ENCODE measurements at regions of chr3 and their contacts with region 1.

Region 1: GRCh38 chr3:149808209-149808829 is 4.7 kb upstream of the RNF13 start:
- DNase-seq: peak; percentile 59 to 72 (median 71)
- H3K4me3 ChIP-seq: no peak overlapping the region
- H3K4me3 Mint-ChIP-seq: no peak overlapping the region
- H3K27ac ChIP-seq: no peak overlapping the region
- H3K27ac Mint-ChIP-seq: no peak overlapping the region
- H3K4me1 ChIP-seq: peaks cover 14 to 24% of the 10 kb centered on the region in 2 donors
- H3K4me1 Mint-ChIP-seq: peaks cover 24% of the 10 kb centered on the region
- H3K27me3 ChIP-seq: no peaks in the 10 kb centered on the region
- H3K27me3 Mint-ChIP-seq: peaks cover 0 to 5% (median 2%) of the 10 kb centered on the region in 3 donors
- CTCF ChIP-seq: peak; percentile 89

Region 2: DNA sequence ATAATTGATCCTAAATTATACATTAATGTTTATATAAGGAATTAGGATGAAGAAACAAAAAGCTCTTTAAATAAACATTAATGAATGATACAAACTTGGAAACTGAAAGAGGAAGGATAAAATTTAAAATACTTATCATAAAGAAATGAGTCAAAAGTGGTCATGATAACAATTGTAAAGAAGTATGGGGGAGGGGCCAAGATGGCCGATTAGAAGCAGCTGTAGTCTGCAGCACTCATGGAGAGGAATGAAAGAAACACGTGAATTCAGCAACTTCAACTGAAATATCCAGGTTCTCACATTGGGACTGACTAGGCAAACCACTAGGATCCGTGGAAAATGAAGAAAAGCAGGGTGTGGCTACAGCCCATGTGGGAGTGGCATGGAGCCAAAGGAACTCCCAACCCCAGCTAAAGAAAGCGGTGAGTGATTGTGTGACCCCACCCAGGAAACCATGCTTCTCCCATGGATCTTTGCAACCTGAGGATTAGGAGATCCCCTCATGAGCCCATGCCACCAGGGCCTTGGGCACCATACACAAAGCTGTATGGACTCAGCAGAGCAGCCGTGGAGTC is 573.6 kb before region 1 on chr3:
- intact Hi-C with region 1: no loop called
- DNase-seq: no peak
- H3K4me3 ChIP-seq: no peak overlapping the region
- H3K4me3 Mint-ChIP-seq: peak overlapping the region in 1 of 2 donors; percentile 6
- H3K27ac ChIP-seq: no peak overlapping the region
- H3K27ac Mint-ChIP-seq: peak overlapping the region in 1 of 7 donors; percentile 81
- H3K4me1 ChIP-seq: peaks cover 7 to 13% of the 10 kb centered on the region in 2 donors
- H3K4me1 Mint-ChIP-seq: peaks cover 8% of the 10 kb centered on the region
- H3K27me3 ChIP-seq: no peaks in the 10 kb centered on the region
- H3K27me3 Mint-ChIP-seq: peaks cover 0 to 1% (median 0%) of the 10 kb centered on the region in 3 donors
- CTCF ChIP-seq: no peak

Region 3: DNA sequence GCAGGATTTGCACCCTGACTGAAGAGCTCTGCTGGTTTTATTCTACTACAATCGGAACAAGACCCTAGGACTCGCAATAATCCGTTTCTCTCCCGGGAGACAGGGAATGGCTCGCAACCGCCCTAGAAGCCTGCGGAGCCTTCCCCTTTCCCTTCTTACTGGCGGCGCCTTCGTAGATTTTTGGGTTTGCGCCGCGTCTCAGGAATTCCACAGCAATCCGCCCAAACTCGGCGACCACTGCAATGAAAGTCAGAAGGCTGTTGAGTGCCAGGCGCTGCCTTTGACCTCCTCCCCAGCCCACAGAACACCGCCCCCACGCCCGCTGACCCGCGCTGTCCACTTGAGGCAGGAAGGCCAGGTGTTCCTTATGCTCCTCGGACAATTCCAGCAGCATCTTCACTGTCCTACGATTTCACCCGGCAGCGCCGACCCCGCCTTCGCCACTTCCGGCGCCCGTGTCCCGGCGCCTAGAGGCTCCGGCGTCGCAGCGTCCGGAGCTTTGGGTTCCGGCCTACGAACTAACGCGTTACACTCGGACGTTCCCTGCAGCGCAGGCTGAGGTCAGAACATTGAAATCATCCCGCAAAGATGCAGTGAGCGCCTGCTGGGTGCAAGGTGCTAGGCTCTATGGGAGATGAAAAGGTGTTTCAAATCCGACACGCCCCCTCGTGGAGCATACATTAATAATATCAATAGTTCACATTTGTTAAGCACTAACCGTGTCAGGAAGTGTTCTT is 56.1 kb before region 1 on chr3 and contains the start of gene COMMD2:
- intact Hi-C with region 1: loop called in 1 of 2 experiments (anchors 5 kb)
- DNase-seq: peak; percentile 61 to 69 (median 69)
- H3K4me3 ChIP-seq: peak within 1 kb of the TSS; percentile 86 to 97 (median 95)
- H3K4me3 Mint-ChIP-seq: peak within 1 kb of the TSS; percentile 95 to 99
- H3K27ac ChIP-seq: peak within 1 kb of the TSS; percentile 44 to 83
- H3K27ac Mint-ChIP-seq: peak within 1 kb of the TSS; percentile 80 to 95 (median 91)
- H3K4me1 ChIP-seq: peaks cover 7 to 24% of the 10 kb centered on the region in 2 donors
- H3K4me1 Mint-ChIP-seq: peaks cover 21% of the 10 kb centered on the region
- H3K27me3 ChIP-seq: no peaks in the 10 kb centered on the region
- H3K27me3 Mint-ChIP-seq: peaks cover 0 to 4% (median 0%) of the 10 kb centered on the region in 3 donors
- CTCF ChIP-seq: peak; percentile 24
- polyA plus RNA-seq, gene COMMD2: 15.1 to 74.4 (median 73.5) TPM

Region 4: DNA sequence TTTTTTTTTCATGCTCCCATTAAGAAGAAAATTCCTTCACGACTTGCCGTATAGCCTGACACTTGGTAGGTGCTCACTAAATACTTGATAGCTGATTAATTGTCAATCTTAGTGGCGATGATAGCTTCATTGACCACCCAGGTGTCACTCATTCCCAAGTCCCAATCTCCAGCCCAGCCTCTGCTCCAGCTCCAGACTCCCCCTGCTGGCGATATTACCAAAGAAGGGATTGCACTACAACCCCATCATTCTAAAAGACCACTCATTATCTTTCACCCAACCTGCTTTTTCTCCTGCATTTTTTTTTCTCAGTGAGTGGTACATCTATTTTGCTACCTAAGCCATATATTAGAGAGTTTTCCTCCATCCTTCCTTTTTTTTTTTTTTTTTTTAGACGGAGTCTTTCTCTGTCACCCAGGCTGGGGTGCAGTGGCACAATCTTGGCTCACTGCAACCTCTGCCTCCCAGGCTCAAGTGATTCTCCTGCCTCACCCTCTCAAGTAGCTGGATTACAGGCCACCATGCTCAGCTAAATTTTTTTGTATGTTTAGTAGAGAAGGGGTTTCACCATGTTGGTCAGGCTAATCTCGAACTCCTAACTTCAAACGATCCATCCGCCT is 36.6 kb before region 1 on chr3:
- intact Hi-C with region 1: loop called in 1 of 2 experiments (anchors 5 kb)
- DNase-seq: peak in 2 of 3 donors; percentile 26 to 38
- H3K4me3 ChIP-seq: no peak overlapping the region
- H3K4me3 Mint-ChIP-seq: no peak overlapping the region
- H3K27ac ChIP-seq: no peak overlapping the region
- H3K27ac Mint-ChIP-seq: no peak overlapping the region
- H3K4me1 ChIP-seq: no peaks in the 10 kb centered on the region
- H3K4me1 Mint-ChIP-seq: no peaks in the 10 kb centered on the region
- H3K27me3 ChIP-seq: no peaks in the 10 kb centered on the region
- H3K27me3 Mint-ChIP-seq: peaks cover 0 to 9% (median 2%) of the 10 kb centered on the region in 3 donors
- CTCF ChIP-seq: peak; percentile 86

Measured in CD14-positive monocyte (primary cell).